GM10248 (cell line): ENCODE measurements at regions of chr11 and their contacts with region 1.

Region 1: GRCh38 chr11:59610289-59610688 is 5.3 kb downstream of the OSBP start:
- DNase-seq: no peak
- CTCF ChIP-seq: no peak

Region 2: DNA sequence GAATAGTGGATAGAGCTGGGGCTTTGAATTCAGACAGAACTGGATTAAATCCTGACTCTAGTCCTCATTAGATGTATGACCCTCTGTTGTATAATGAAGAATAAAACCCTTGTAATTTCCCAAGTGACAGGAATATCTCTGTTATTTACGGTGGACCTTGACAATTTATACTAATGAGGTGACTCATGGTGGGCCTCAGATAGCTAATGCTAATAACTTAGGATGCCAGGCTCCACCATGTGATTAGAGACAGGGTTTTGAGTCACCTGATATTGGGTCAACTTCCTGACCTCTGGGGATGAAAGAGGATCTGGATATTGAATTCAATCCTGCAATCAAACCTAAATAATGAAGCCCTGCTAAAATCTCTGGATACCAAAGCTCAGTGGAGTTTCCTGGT is 28.3 kb before region 1 on chr11:
- CTCF ChIA-PET with region 1: no interaction called
- POLR2A ChIA-PET with region 1: no interaction called
- DNase-seq: no peak
- CTCF ChIP-seq: no peak

Region 3: DNA sequence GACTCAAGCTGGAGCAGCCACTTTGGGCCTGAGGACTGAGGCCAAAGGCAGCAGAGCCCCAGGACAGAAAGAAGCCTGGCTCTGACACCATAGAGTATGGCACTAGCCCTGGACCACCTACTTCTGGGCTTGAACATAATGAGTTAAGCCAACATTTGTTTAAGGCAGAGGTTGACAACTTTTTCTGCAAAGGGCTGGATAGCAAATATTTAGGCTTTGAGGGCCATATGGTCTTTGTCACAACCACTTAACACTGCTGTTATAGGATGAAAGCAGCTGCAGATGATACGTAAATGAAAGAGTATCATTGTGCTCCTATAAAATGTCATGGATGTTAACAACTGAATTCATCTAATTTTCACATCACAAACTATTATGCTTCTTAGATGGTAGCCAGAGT is 11.3 kb before region 1 on chr11:
- CTCF ChIA-PET with region 1: interaction called, 12 read pairs
- POLR2A ChIA-PET with region 1: interaction called, 3 read pairs
- DNase-seq: no peak
- CTCF ChIP-seq: no peak